ENCODE measurements at regions of chr1 and their contacts with region 1.

Region 1: DNA sequence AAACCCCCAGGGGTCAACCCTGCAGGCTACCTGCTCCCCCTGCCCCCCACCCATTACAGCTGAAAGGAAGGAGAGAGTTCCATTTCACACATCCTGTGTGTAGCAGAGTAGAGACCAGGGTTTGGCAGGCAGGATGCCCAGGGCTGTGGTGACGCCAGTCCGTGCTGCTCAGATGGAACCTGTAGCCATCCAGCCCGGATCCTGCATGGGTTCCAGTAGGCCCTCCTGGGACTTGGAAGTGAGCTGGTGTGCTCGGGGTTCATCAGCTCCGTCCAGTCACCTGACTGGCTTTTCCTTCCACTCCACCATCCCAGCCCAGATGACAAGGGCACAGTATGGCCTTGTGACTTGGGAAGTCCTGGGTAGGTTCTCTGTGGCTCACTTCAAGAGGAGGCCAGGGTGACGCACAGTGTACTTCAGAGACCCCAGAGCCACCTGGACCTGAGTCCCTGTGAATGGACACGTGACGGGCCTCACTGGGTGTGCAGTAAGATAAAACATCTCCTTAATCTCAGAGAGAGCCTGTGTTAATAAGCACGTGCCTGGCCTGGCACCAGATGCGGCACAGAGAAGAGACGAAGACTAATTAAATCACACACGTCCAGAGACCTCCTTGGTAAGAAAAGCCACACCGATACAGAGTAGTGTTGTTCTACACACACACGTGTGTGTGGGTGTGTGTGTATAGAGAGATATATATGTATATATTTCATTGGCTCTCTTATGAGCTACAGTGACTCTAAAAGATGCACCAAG is 16.0 kb downstream of the ITPKB start:
- DNase-seq: no peak
- CTCF ChIP-seq: no peak

Region 2: GRCh38 chr1:226738995-226739695 is 16.1 kb after region 1 on chr1 and contains the start of gene ITPKB:
- CTCF ChIA-PET with region 1: interaction called, 3 read pairs
- POLR2A ChIA-PET with region 1: interaction called, 10 read pairs
- DNase-seq: peak; percentile 67
- CTCF ChIP-seq: no peak